Natural killer cell (primary cell): ENCODE measurements at regions of chr14 and their contacts with region 1.

Region 1: DNA sequence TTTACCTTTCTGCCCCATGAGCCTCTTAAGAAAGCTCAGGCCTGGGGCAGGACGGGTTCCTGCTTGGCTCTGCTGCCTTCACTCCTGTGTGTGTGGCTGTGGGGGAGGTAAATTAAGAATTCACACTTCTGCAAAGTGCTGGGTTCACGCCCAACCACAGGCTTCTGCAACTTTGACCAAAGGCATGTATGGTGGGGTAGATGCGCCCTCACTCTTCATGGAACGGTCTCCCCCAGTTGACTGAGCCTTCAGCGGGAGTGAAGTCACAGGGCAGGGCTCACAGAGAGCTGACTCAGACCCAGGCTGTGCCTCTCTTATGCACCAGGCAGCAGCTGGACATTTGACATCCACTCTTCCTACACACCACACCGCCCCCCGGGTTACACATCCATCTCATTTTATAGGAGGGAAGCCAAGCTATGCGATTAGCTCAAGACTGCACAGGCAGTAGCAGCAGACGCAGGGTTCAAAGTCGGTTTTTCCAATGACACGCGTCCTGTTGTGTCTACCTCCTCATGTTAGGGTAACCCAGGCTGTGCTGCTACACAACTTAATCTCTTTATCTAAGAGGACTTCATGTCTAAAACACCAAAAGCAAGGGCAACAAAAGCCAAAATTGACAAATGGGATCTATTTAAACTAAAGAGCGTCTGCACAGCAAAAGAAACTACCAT is 15.4 kb upstream of the BCL11B start:
- DNase-seq: peak; percentile 62 to 67
- ATAC-seq: peak; percentile 84 to 87 (median 87)
- H3K4me3 ChIP-seq: peak overlapping the region; percentile 48
- H3K4me3 Mint-ChIP-seq: peak overlapping the region; percentile 92
- H3K27ac ChIP-seq: peak overlapping the region; percentile 81
- H3K27ac Mint-ChIP-seq: peak overlapping the region; percentile 95 to 97
- H3K4me1 ChIP-seq: peaks cover 50% of the 10 kb centered on the region
- H3K4me1 Mint-ChIP-seq: peaks cover 66 to 70% of the 10 kb centered on the region in 2 donors
- H3K27me3 ChIP-seq: no peaks in the 10 kb centered on the region
- H3K27me3 Mint-ChIP-seq: peaks cover 0 to 3% of the 10 kb centered on the region in 2 donors
- CTCF ChIP-seq: no peak

Region 2: GRCh38 chr14:99271951-99272631 is 15.3 kb before region 1 on chr14 and contains the start of gene BCL11B:
- intact Hi-C with region 1: loop called (anchors 2 kb)
- DNase-seq: peak; percentile 73 to 96
- ATAC-seq: peak; percentile 71 to 89 (median 78)
- H3K4me3 ChIP-seq: peak within 1 kb of the TSS; percentile 61
- H3K4me3 Mint-ChIP-seq: peak within 1 kb of the TSS; percentile 99
- H3K27ac ChIP-seq: peak within 1 kb of the TSS; percentile 60
- H3K27ac Mint-ChIP-seq: peak within 1 kb of the TSS; percentile 90 to 91
- H3K4me1 ChIP-seq: peaks cover 43% of the 10 kb centered on the region
- H3K4me1 Mint-ChIP-seq: peaks cover 65 to 71% of the 10 kb centered on the region in 2 donors
- H3K27me3 ChIP-seq: no peaks in the 10 kb centered on the region
- H3K27me3 Mint-ChIP-seq: no peaks in the 10 kb centered on the region
- CTCF ChIP-seq: peak; percentile 65
- total RNA-seq, gene BCL11B: 43.5 to 61.5 (median 56.2) TPM

Region 3: DNA sequence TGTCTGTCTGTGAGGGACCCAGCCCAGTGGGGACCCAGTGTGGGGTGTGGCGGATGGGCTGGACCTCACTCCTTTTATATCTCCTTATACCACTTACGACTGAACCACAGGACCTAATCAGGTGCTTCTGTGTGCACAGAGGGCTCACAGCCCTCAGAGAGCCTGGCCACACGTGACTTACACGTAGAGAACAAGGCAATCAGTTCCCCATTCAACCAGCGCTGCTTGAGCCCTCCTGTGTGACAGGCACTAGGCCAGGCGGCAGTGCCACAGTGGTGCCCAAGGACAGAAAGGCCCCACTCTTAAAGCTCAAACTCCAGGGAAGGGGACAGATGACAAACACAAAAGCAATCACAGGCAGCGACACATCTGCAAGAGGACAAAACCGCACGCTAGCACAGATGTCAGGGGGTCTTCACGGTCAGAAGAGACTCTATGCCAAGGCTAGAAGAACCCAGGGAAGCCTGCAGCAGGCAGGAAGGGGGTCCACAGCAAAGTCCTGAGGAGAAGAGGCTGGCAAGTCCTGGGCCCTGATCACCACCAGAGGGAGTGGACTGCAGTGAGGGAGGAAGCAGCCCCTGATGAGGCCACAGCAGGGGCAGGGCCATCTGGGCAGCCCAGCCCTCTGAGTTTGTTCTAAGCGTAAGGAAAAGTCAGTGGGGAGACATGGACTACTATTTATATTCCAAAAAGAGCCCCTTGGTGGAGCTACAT is 153.9 kb after region 1 on chr14:
- intact Hi-C with region 1: no loop called
- DNase-seq: no peak
- ATAC-seq: peak in 1 of 3 donors; percentile 56
- H3K4me3 ChIP-seq: no peak overlapping the region
- H3K4me3 Mint-ChIP-seq: peak overlapping the region; percentile 79
- H3K27ac ChIP-seq: peak overlapping the region; percentile 17
- H3K27ac Mint-ChIP-seq: peak overlapping the region; percentile 81 to 90
- H3K4me1 ChIP-seq: peaks cover 45% of the 10 kb centered on the region
- H3K4me1 Mint-ChIP-seq: peaks cover 55 to 80% of the 10 kb centered on the region in 2 donors
- H3K27me3 ChIP-seq: no peaks in the 10 kb centered on the region
- H3K27me3 Mint-ChIP-seq: no peaks in the 10 kb centered on the region
- CTCF ChIP-seq: no peak